ENCODE measurements at regions of chr16 and their contacts with region 1.

Region 1: GRCh38 chr16:82709987-82710386 is 83.2 kb downstream of the CDH13 start:
- DNase-seq: no peak
- H3K4me3 ChIP-seq: no peak overlapping the region
- H3K27ac ChIP-seq: no peak overlapping the region
- H3K4me1 ChIP-seq: no peaks in the 10 kb centered on the region
- H3K27me3 ChIP-seq: no peaks in the 10 kb centered on the region
- CTCF ChIP-seq: no peak

Region 2: DNA sequence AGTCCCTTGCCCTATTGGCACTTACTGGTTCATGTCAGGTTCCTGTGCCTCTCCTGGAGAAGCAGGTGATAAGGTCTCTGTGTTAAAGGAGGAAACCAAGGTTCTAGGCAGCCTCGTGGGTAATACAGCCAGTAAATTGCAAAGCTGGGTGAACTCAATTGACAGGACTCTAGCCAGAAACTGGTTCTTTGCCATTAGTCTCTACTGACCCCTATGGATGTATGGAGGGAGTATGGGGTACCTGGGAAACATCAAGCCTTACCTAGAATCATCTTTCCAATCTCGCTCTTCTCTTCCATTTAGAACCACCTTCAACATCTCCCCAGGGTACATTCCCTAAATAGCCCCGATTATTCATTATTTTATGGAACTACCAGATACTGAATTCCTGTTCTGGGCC is 86.1 kb after region 1 on chr16:
- CTCF ChIA-PET with region 1: no interaction called
- dilution Hi-C with region 1: loop called (anchors 5 kb)
- in situ Hi-C with region 1: no loop called
- intact Hi-C with region 1: no loop called
- DNase-seq: no peak
- H3K4me3 ChIP-seq: no peak overlapping the region
- H3K27ac ChIP-seq: no peak overlapping the region
- H3K4me1 ChIP-seq: no peaks in the 10 kb centered on the region
- H3K27me3 ChIP-seq: no peaks in the 10 kb centered on the region
- CTCF ChIP-seq: peak in 1 of 2 donors; percentile 12